Activated naive CD4-positive, alpha-beta T cell treated with anti-CD3 and anti-CD28 coated beads for 36 hours (primary cell): ENCODE measurements at regions of chr3 and their contacts with region 1.

Region 1: GRCh38 chr3:185937689-185938463 is at the start of gene TRA2B:
- DNase-seq: peak; percentile 99
- H3K4me3 Mint-ChIP-seq: peak within 1 kb of the TSS; percentile 100
- H3K27ac Mint-ChIP-seq: peak within 1 kb of the TSS; percentile 100
- H3K4me1 Mint-ChIP-seq: peaks cover 20% of the 10 kb centered on the region
- H3K27me3 Mint-ChIP-seq: no peaks in the 10 kb centered on the region
- total RNA-seq, gene TRA2B: 172 to 176 TPM

Region 2: DNA sequence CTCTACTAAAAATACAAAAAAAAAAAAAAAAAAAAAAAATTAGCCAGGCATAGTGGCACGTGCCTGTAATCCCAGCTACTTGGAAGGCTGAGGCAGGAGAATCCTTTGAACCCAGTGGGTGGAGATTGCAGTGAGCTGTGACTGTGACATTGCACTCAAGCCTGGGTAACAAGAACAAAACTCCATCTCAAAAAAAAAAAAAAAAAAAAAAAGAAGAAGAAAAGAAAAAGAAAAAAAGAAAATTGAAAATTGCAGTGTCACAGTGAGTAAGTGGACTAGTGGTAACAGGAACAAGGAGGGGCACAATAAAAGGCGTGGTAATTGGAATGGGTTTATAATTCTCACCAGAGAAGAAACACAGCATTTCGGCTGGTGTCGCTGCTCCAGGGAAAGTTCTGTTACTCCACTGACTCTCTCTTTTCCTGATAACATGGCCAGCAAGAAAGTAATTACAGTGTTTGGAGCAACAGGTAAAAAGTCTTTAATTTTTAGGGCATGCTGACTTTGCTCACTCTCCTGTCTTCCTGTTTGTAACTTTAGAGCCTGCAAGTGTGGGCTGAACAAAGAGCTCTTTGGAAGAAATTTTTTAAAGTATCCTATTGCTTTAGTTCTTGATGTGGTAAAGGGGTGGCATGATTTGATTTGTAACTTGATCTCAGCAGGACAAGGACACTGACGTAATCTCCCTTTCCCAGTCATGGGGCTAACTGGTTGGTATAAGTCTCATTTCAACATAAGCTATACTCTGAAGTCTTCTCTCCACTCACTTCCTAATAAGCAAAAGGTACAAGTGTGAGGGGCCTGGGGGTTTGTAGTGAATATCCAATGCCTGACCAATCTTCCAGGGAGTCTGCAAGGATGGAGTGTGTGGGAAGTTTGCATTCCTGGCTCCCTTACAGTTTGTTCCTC is 22.0 kb after region 1 on chr3:
- CTCF ChIA-PET with region 1: interaction called, 120 read pairs
- intact Hi-C with region 1: loop called (anchors 1 kb)
- DNase-seq: peak; percentile 38
- H3K4me3 Mint-ChIP-seq: no peak overlapping the region
- H3K27ac Mint-ChIP-seq: no peak overlapping the region
- H3K4me1 Mint-ChIP-seq: peaks cover 9% of the 10 kb centered on the region
- H3K27me3 Mint-ChIP-seq: no peaks in the 10 kb centered on the region

Region 3: GRCh38 chr3:186185194-186185787 is 247.4 kb after region 1 on chr3:
- CTCF ChIA-PET with region 1: no interaction called
- intact Hi-C with region 1: no loop called
- DNase-seq: peak; percentile 65
- H3K4me3 Mint-ChIP-seq: no peak overlapping the region
- H3K27ac Mint-ChIP-seq: peak overlapping the region; percentile 52
- H3K4me1 Mint-ChIP-seq: peaks cover 13% of the 10 kb centered on the region
- H3K27me3 Mint-ChIP-seq: peaks cover 2% of the 10 kb centered on the region

Region 4: GRCh38 chr3:187139126-187139894 is 1201.4 kb after region 1 on chr3 and contains the start of gene RPL39L:
- CTCF ChIA-PET with region 1: no interaction called
- intact Hi-C with region 1: loop called (anchors 5 kb)
- DNase-seq: peak; percentile 95
- H3K4me3 Mint-ChIP-seq: peak within 1 kb of the TSS; percentile 91
- H3K27ac Mint-ChIP-seq: peak within 1 kb of the TSS; percentile 95
- H3K4me1 Mint-ChIP-seq: peaks cover 21% of the 10 kb centered on the region
- H3K27me3 Mint-ChIP-seq: no peaks in the 10 kb centered on the region
- total RNA-seq, gene RPL39L: 19.2 to 20.9 TPM